ENCODE measurements at regions of chr1 and their contacts with region 1.

Region 1: GRCh38 chr1:2545759-2546514 is 10.2 kb upstream of the TNFRSF14 start:
- DNase-seq: peak; percentile 95
- ATAC-seq: peak; percentile 52
- H3K4me3 ChIP-seq: peak overlapping the region in 4 of 5 experiments; percentile 69 to 89 (median 76)
- H3K4me3 Mint-ChIP-seq: peak overlapping the region; percentile 92
- H3K27ac ChIP-seq: peak overlapping the region; percentile 99 to 100
- H3K27ac Mint-ChIP-seq: peak overlapping the region; percentile 98
- H3K4me1 ChIP-seq: peaks cover 34 to 47% of the 10 kb centered on the region in 2 donors
- H3K4me1 Mint-ChIP-seq: peaks cover 33% of the 10 kb centered on the region
- H3K27me3 ChIP-seq: peaks cover 0 to 16% (median 2%) of the 10 kb centered on the region in 4 experiments
- H3K27me3 Mint-ChIP-seq: peaks cover 6% of the 10 kb centered on the region
- CTCF ChIP-seq: no peak

Region 2: DNA sequence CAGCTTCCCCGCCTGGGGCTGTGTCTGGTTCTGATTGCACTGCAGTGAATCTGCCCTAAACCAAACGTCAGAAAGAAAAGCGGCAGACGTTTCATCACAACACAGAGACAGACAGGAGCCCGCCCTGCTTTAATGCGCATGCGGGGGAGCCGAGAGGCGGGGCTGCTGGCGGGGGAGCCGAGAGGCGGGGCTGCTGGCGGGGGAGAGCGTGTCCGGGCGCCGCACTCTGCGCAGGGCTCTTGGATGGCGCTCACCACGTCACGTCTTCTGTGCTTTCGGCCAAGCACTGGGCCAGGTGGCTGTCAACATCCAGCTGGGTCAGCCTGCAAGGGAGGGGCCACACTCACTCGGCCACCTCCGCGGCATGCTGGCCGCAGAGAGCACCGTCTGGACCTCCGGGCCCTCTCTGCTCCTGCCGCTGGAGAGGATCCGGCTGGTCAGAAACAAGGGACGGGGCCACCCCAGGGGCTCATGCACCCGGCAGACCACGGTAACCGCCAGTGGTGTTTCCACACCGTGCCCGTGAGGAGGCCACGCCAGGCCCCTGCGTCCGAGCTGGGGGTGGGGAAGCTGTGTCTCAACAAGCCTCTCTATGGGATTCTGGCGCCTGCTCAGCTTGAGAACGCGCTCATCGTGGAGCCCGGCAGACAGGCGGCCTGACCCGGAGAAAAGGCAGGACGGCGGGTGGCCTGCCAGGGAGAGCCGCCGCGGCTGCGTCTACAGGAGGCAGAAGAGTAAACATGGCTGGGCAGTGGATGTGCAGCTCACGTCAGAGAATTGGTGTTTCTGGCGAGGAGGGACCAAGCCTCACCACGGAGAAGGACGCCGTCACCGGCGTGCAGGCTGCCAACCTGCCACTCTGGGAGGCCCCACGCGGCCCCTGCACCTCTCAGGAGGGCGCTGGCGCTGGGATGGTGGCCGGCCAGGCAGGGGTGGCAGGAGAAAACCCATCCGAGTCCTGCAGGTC is 356.2 kb before region 1 on chr1:
- CTCF ChIA-PET with region 1: interaction called, 29 read pairs
- POLR2A ChIA-PET with region 1: interaction called, 12 read pairs
- intact Hi-C with region 1: loop called (anchors 1 kb)
- DNase-seq: peak; percentile 90
- ATAC-seq: peak; percentile 90
- H3K4me3 ChIP-seq: peak overlapping the region in 4 of 5 experiments; percentile 33 to 57 (median 54)
- H3K4me3 Mint-ChIP-seq: peak overlapping the region; percentile 75
- H3K27ac ChIP-seq: peak overlapping the region in 1 of 2 donors; percentile 73
- H3K27ac Mint-ChIP-seq: peak overlapping the region; percentile 93
- H3K4me1 ChIP-seq: peaks cover 4 to 25% of the 10 kb centered on the region in 2 donors
- H3K4me1 Mint-ChIP-seq: peaks cover 15% of the 10 kb centered on the region
- H3K27me3 ChIP-seq: no peaks in the 10 kb centered on the region
- H3K27me3 Mint-ChIP-seq: no peaks in the 10 kb centered on the region
- CTCF ChIP-seq: no peak

Region 3: GRCh38 chr1:2391041-2391930 is 154.7 kb before region 1 on chr1 and contains the starts of genes MORN1 and RER1:
- CTCF ChIA-PET with region 1: interaction called, 3 read pairs
- POLR2A ChIA-PET with region 1: interaction called, 12 read pairs
- intact Hi-C with region 1: loop called (anchors 1 kb)
- DNase-seq: peak; percentile 99
- ATAC-seq: peak; percentile 94
- H3K4me3 ChIP-seq: peak within 1 kb of the TSS; percentile 61 to 92 (median 76)
- H3K4me3 Mint-ChIP-seq: peak within 1 kb of the TSS; percentile 92
- H3K27ac ChIP-seq: peak within 1 kb of the TSS; percentile 24 to 88
- H3K27ac Mint-ChIP-seq: peak within 1 kb of the TSS; percentile 88
- H3K4me1 ChIP-seq: peaks cover 25 to 47% of the 10 kb centered on the region in 2 donors
- H3K4me1 Mint-ChIP-seq: peaks cover 47% of the 10 kb centered on the region
- H3K27me3 ChIP-seq: no peaks in the 10 kb centered on the region
- H3K27me3 Mint-ChIP-seq: no peaks in the 10 kb centered on the region
- CTCF ChIP-seq: no peak
- total RNA-seq, gene MORN1: 30.4 and 32.6 TPM in 2 replicates
- total RNA-seq, gene RER1: 117 and 118 TPM in 2 replicates

Region 4: GRCh38 chr1:2496087-2496622 is 49.8 kb before region 1 on chr1:
- CTCF ChIA-PET with region 1: interaction called, 5 read pairs
- POLR2A ChIA-PET with region 1: interaction called, 4 read pairs
- intact Hi-C with region 1: loop called (anchors 5 kb)
- DNase-seq: peak; percentile 70
- ATAC-seq: peak; percentile 77
- H3K4me3 ChIP-seq: peak overlapping the region in 2 of 5 experiments; percentile 15 to 25
- H3K4me3 Mint-ChIP-seq: peak overlapping the region; percentile 74
- H3K27ac ChIP-seq: peak overlapping the region; percentile 12 to 59
- H3K27ac Mint-ChIP-seq: peak overlapping the region; percentile 94
- H3K4me1 ChIP-seq: peaks cover 78 to 84% of the 10 kb centered on the region in 2 donors
- H3K4me1 Mint-ChIP-seq: peaks cover 68% of the 10 kb centered on the region
- H3K27me3 ChIP-seq: no peaks in the 10 kb centered on the region
- H3K27me3 Mint-ChIP-seq: no peaks in the 10 kb centered on the region
- CTCF ChIP-seq: no peak

Region 5: GRCh38 chr1:2556277-2556677 is 10.3 kb after region 1 on chr1 and contains the start of gene TNFRSF14:
- CTCF ChIA-PET with region 1: interaction called, 12 read pairs
- POLR2A ChIA-PET with region 1: interaction called, 30 read pairs
- intact Hi-C with region 1: loop called (anchors 1 kb)
- DNase-seq: peak; percentile 88
- ATAC-seq: peak; percentile 61
- H3K4me3 ChIP-seq: peak within 1 kb of the TSS; percentile 82 to 91 (median 85)
- H3K4me3 Mint-ChIP-seq: peak within 1 kb of the TSS; percentile 95
- H3K27ac ChIP-seq: peak within 1 kb of the TSS; percentile 87 to 99
- H3K27ac Mint-ChIP-seq: peak within 1 kb of the TSS; percentile 97
- H3K4me1 ChIP-seq: peaks cover 31 to 43% of the 10 kb centered on the region in 2 donors
- H3K4me1 Mint-ChIP-seq: peaks cover 48% of the 10 kb centered on the region
- H3K27me3 ChIP-seq: no peaks in the 10 kb centered on the region
- H3K27me3 Mint-ChIP-seq: no peaks in the 10 kb centered on the region
- CTCF ChIP-seq: peak; percentile 36
- total RNA-seq, gene TNFRSF14: 239 and 243 TPM in 2 replicates

Region 6: DNA sequence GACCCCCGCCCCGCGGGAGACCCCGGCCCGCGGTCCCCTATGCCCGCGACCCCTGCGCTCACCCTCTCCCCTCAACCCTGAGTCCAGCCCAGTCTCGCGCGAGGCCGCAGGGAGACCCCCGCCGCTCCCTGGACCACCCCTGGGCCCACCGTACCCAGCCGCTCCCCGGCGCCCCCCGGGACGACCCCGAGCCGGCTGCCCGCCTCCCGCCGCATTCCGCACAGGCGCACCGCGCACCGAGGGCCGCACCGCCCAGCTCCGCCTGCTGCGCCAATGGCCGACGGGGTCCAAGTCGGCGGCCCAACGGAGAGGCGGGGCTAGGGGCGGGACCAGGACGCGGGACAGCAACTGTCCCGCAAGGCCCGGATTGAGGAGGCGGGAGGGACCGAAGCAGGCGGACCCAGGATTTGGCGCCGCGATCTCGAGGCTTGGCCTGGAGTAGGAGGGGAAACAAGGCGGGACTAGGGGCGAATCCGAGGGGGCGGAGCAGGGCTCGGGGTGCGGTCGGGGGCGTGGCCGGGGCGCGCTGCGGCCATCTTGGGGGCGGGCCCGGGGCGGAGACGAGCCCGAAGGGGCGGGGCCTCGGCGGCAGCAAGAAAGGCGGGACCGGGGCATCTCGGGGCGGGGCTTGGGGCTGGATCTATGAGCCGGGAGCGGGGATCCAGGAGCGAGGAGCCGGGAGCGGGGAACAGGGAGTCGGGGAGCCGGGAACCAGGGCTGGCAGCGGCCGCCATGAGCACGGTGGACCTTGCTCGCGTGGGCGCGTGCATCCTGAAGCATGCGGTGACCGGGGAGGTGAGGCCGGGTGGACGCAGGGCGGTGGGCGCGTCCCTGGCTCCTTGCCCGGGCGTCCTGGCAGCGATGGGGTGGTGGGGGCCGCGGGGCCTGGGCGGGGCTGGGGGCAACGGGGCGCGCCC is 40.5 kb after region 1 on chr1 and contains the start of gene PRXL2B:
- CTCF ChIA-PET with region 1: interaction called, 55 read pairs
- POLR2A ChIA-PET with region 1: interaction called, 88 read pairs
- intact Hi-C with region 1: loop called (anchors 1 kb)
- DNase-seq: peak; percentile 97
- ATAC-seq: peak; percentile 67
- H3K4me3 ChIP-seq: peak within 1 kb of the TSS; percentile 63 to 81 (median 77)
- H3K4me3 Mint-ChIP-seq: peak within 1 kb of the TSS; percentile 95
- H3K27ac ChIP-seq: peak within 1 kb of the TSS; percentile 98 to 99
- H3K27ac Mint-ChIP-seq: peak within 1 kb of the TSS; percentile 99
- H3K4me1 ChIP-seq: peaks cover 38 to 53% of the 10 kb centered on the region in 2 donors
- H3K4me1 Mint-ChIP-seq: peaks cover 43% of the 10 kb centered on the region
- H3K27me3 ChIP-seq: no peaks in the 10 kb centered on the region
- H3K27me3 Mint-ChIP-seq: no peaks in the 10 kb centered on the region
- CTCF ChIP-seq: no peak
- total RNA-seq, gene PRXL2B: 27.0 and 27.9 TPM in 2 replicates

Measured in B cell (primary cell).